Kidney (tissue), 22 donors: ENCODE measurements at regions of chr13 and their contacts with region 1.

Region 1: DNA sequence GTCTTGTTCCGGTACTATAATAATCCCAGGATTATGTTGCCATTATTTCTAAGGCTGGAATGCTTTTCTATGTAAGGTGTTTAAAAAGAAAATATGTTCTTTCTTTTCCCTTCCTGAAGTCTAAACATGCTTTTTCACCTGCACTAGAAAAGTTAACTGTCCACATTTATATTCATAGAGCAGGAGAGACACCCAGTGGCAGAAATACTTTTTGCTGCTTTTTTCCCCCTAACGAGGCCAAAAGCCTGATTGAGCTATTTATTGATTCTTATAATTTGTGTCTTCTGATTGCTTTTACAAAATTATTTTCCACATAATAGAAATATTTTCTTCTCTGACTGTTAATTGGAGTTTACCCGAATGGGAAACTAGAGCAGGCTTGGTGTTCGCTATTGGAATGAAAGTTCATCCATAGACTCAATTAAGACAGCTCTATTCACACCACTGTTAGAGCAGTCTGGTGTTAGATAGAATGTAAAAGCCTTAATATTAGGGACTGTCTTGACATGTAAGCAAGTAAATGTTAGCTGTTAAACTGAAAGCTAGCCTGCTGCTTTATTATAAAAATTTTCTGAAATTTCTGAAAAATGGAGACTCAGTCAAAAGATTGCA is 15.8 kb downstream of the GPR180 start:
- DNase-seq: peak in 2 of 5 donors; percentile 27 to 60
- H3K4me3 ChIP-seq: no peak overlapping the region
- H3K27ac ChIP-seq: no peak overlapping the region
- H3K4me1 ChIP-seq: no peaks in the 10 kb centered on the region
- H3K27me3 ChIP-seq: no peaks in the 10 kb centered on the region
- CTCF ChIP-seq: peak; percentile 59

Region 2: GRCh38 chr13:94435604-94436226 is 181.8 kb before region 1 on chr13:
- intact Hi-C with region 1: loop called (anchors 10 kb)
- DNase-seq: peak in 2 of 5 donors; percentile 74 to 75
- H3K4me3 ChIP-seq: no peak overlapping the region
- H3K27ac ChIP-seq: no peak overlapping the region
- H3K4me1 ChIP-seq: no peaks in the 10 kb centered on the region
- H3K27me3 ChIP-seq: no peaks in the 10 kb centered on the region
- CTCF ChIP-seq: peak; percentile 55

Region 3: GRCh38 chr13:95620030-95620824 is 1002.7 kb after region 1 on chr13:
- intact Hi-C with region 1: no loop called
- DNase-seq: no peak
- H3K4me3 ChIP-seq: no peak overlapping the region
- H3K27ac ChIP-seq: peak overlapping the region; percentile 32 to 55
- H3K4me1 ChIP-seq: peaks cover 0 to 12% (median 2%) of the 10 kb centered on the region in 3 donors
- H3K27me3 ChIP-seq: no peaks in the 10 kb centered on the region
- CTCF ChIP-seq: no peak